ENCODE measurements at regions of chr1 and their contacts with region 1.

Region 1: DNA sequence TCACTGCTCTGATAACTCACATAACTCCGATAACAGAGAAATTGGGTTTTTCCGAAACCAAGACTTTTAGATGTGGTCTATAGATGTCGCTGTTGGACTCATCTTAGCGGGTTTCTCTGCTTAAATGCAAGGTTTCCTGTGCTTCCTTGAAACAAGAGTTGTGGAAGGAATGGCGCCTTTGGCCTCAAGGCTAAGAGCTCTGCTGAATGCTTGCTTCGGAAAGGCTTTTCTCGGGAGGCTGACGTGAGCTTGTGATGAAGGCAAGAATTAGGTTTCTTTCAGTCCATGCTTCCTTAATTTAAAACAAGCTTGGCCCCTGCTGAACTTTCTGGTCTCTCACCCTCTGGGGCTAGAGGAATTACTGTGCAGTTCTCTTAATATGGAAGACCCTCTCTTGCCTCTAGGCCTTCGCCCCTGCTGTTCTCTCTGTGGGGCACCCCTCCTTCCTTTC is 113.5 kb downstream of the MAP3K21 start:
- DNase-seq: peak; percentile 78

Region 2: DNA sequence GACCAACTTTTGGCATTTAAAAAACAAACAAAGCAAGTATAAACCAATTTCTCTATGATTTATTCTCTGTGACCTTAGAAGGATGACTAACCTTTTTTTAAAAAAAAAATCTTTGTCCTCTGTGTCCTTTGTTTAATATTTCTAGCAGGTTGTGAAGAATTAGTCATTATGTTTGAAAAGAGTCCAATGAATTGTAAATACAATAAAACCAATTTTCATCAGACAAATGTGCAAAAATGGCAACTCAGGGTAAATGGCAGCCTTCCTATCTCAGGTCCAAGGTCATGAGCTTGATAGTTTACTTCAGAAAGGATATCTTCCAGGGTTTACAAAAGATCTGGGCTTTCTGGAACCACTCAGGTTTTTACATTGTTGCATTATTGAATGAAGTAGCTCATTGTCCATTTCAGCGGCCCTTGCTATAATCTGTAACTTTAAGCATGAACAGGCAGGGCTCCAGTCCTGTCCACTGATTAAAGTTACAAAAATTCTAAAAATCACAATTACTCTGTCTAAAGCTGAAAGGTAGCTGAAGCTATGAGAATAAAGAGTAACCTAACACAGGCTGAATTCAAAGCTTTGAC is 125.2 kb before region 1 on chr1:
- CTCF ChIA-PET with region 1: no interaction called
- POLR2A ChIA-PET with region 1: no interaction called
- DNase-seq: no peak

Region 3: DNA sequence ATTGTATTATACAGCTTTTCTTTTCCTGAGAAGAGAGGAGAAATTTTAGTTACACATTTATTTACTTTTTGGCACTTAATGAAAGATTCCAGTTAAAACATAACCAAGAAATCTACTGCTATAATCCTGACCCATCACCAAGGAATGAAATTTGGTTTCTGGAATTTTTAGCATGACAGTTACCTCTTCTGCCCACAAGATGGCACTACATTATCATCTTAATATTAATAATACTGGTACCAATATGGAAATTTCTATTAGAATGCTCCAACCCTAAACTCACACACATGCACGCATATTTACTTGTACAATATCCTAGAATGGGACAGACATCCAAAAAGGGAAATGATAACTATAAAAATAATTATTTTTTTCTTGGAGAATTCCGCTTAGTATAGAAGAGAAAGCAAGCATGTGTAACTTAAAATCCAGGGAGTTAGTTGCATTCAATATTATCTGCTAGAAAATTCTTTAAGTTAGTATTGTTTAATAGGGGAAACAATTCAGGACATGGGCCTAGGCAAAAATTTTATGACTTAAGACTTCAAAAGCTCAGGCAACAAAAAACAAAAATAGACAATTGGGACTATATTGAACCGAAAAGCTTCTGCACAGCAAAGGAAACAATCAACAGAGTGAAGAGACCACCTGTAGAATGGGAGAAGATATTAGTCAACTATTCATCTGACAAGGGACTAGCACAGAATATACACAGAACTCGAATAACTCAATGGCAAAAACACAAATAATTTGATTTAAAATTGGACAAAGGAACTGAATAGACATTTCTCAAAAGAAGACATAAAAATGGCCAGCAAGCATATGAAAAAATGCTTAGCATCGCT is 76.1 kb before region 1 on chr1:
- CTCF ChIA-PET with region 1: no interaction called
- POLR2A ChIA-PET with region 1: no interaction called
- DNase-seq: no peak

Region 4: GRCh38 chr1:233376382-233377110 is 64.4 kb before region 1 on chr1:
- CTCF ChIA-PET with region 1: no interaction called
- POLR2A ChIA-PET with region 1: no interaction called
- DNase-seq: no peak

Region 5: GRCh38 chr1:233463333-233463732 is 22.4 kb after region 1 on chr1:
- CTCF ChIA-PET with region 1: no interaction called
- POLR2A ChIA-PET with region 1: no interaction called
- DNase-seq: no peak

Region 6: DNA sequence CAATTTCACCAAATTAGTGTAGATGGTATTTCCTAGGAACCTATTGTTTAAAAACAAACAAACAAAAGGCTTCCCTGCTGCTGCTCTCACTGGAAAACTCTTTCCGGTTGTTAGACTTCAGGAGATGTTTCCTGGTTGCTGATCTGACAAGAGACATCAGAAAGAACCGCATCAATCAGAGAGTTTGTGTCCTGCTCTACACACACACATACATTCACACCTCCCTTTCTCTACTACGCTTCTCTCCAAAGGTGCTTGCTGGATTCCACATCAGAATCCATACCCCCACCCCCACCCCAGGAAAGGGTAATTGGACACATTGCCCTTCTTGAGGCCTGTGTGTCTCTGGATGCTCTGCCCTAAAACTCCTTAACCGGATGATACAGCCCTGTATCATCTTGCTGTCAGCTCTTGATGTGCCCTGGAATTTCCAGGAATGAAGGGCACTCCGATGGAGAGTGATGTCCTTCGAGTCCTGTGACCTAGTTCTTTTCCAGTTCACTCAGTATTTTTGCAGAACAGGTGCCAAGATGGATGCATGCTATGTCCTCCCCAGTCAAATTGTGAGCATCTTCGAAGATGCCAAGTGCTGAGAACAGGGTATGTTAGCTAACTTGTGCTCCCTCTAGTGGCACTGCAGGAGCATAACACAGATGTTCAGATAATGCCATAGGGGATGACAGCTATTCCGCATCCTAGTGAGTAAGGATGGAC is 349.8 kb after region 1 on chr1:
- CTCF ChIA-PET with region 1: interaction called, 13 read pairs
- POLR2A ChIA-PET with region 1: no interaction called
- DNase-seq: peak; percentile 83